Dorsolateral prefrontal cortex (tissue), 120 donors: ENCODE measurements at regions of chr19 and their contacts with region 1.

Region 1: DNA sequence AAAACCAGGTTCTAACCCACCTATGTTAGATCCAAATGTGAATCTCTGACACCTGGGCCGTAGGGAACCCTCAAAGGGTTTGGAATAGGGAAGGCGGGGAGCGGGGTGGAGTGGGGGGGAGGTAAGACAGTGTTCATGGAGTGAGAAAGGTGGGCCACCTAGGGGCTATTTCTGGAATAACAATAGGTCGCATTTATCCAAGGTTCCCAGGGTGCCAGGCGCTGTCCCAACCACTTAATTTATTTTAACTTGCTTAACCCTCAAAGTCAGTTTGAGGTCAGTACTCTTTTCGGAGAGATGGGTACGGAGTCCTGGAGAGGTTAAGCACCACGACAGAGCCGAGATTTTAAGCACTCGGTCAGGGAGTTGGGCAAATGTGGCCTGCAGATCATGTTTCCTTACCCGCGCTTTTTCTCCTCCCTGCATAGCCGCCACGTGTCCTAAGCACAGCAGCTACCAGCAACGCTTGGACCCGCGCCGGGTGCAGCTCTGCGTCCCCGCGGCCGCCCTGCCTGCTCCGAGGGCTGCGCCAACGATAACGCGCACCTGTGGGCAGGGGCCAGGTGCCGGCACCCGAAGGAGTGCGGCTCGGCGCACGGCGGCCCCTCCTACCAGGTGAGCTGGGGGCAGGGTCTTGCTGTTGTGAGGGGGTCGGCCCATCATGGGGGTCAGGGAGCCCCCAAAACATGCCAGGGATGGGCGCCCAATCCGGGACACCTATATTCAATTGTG is 25.0 kb upstream of the FXYD3 start:
- DNase-seq: peak in 5 of 10 donors; percentile 54 to 77 (median 60)
- H3K4me3 ChIP-seq: peak overlapping the region in 58 of 59 donors; percentile 13 to 62 (median 42)
- H3K27ac ChIP-seq: peak overlapping the region in 56 of 59 donors; percentile 5 to 89 (median 72)
- H3K27me3 ChIP-seq: peaks cover 0 to 4% (median 0%) of the 10 kb centered on the region in 45 donors
- CTCF ChIP-seq: peak; percentile 22 to 83 (median 70)

Region 2: GRCh38 chr19:34888091-34888490 is 202.6 kb before region 1 on chr19:
- intact Hi-C with region 1: no loop called
- DNase-seq: no peak
- H3K4me3 ChIP-seq: no peak overlapping the region
- H3K27ac ChIP-seq: no peak overlapping the region
- H3K27me3 ChIP-seq: no peaks in the 10 kb centered on the region
- CTCF ChIP-seq: no peak

Region 3: GRCh38 chr19:35044317-35045117 is 46.2 kb before region 1 on chr19:
- intact Hi-C with region 1: loop called in 1 of 2 experiments (anchors 2 kb)
- DNase-seq: peak in 9 of 10 donors; percentile 73 to 84 (median 79)
- H3K4me3 ChIP-seq: no peak overlapping the region
- H3K27ac ChIP-seq: peak overlapping the region in 53 of 59 donors; percentile 7 to 99 (median 74)
- H3K27me3 ChIP-seq: no peaks in the 10 kb centered on the region
- CTCF ChIP-seq: peak; percentile 92 to 100 (median 98)

Region 4: DNA sequence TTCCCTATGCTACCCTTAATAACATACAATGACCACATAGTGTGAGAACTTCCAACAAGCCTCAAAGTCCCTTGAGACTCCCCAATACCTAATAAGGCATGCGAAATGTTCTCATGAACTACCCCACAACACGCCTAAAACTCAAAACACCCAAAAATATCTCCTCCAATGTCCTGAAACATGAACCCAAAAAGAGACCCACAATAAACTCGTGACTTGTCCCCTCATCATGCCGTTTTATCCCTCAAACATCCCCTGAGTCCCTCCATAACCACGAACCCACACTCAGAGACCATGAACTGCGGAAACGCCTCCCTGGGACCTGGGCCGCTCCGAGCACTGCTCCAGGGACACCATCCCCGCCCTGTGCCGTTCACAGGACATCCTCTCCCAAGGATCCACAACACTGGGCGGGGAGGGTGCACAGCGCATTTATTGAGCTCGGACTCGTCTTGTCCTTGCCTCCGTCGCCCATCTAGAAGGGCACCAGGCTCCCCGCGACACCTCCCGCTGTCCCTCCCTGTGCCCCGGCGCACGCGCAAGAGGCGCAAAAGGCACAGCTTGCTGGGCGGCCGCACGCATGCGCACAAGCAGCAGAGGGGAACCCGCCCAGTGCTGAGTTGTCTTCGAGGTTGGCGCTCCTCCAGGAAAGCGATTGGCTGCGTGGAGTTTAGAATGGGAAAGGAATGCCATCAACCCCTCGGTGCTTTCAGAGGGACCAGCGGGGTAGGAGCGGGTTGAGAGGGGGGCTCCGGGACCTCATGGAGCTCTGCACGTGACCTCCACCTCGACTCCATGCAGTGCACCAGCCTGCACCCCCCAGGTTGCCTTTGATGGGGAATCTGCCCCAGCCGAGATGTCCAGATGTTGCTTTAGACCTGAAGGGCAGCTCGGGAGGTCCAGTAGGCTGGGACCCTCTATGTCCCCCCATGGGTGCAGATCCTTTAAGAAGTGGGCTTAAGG is 33.7 kb after region 1 on chr19:
- intact Hi-C with region 1: loop called in 1 of 2 experiments (anchors 1 kb)
- DNase-seq: peak; percentile 90 to 97 (median 94)
- H3K4me3 ChIP-seq: peak overlapping the region; percentile 40 to 88 (median 67)
- H3K27ac ChIP-seq: peak overlapping the region; percentile 85 to 100 (median 98)
- H3K27me3 ChIP-seq: no peaks in the 10 kb centered on the region
- CTCF ChIP-seq: peak in 30 of 56 donors; percentile 8 to 52 (median 24)